Sigmoid colon (tissue), 7 donors: ENCODE measurements at regions of chr10 and their contacts with region 1.

Region 1: DNA sequence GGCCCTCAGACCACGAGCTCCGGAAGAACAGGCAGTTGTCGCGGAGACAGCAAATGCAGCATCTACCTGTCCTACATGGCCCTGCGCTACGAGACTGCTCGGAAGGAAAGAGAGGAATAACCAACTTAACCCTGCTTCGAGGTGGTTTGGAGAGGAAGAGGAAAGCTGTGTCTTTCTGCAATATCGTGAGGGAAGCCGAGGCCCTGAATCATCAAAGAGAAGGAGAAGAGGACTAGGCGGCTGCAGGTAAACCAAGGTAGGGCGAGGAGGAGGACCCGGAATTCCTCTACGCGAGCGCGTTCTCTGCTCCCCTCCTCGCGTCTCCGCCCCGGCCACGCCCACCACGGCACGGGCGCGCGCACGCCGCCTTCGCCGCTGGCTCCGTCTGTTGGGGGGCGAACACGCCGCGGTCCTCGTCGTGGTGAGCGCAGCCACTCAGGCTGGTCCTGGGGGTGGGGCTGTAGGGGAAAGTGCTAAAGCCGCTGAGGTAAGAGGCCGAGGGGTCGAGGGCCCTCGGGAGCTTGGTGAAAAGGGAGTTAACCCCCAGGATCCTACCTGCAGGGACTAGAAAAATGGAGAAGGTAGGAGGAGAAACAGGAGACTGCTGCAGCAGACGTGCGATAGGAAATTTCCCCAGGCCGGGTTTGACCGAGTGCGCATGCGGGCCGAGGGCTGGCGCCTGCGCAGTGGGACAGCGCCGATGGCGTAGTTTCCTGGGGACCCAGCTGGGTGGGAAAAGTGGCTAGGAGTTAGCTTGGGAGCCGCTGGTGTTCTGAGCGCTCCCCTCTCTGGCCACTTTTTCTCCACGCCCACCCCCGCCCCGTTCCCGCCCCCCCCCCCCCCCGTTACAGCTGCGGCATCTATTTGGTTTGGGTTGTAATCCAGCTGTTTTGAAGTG is at the starts of genes ANAPC16 and ASCC1:
- DNase-seq: peak; percentile 96
- H3K4me3 ChIP-seq: peak within 1 kb of the TSS; percentile 60 to 79 (median 70)
- H3K27ac ChIP-seq: peak within 1 kb of the TSS; percentile 86 to 99 (median 92)
- H3K4me1 ChIP-seq: peaks cover 0 to 51% (median 34%) of the 10 kb centered on the region in 4 donors
- H3K27me3 ChIP-seq: no peaks in the 10 kb centered on the region
- CTCF ChIP-seq: no peak
- EP300 ChIP-seq: peak in 1 of 4 donors; percentile 87
- POLR2A ChIP-seq: peak; percentile 88 to 95
- total RNA-seq, gene ANAPC16: 80.0 to 228 (median 157) TPM
- total RNA-seq, gene ASCC1: 21.0 to 53.7 (median 37.1) TPM

Region 2: GRCh38 chr10:71957546-71958275 is 258.2 kb before region 1 on chr10:
- intact Hi-C with region 1: loop called (anchors 10 kb)
- DNase-seq: no peak
- H3K4me3 ChIP-seq: no peak overlapping the region
- H3K27ac ChIP-seq: no peak overlapping the region
- H3K4me1 ChIP-seq: peaks cover 0 to 7% (median 4%) of the 10 kb centered on the region in 4 donors
- H3K27me3 ChIP-seq: no peaks in the 10 kb centered on the region
- CTCF ChIP-seq: no peak
- EP300 ChIP-seq: no peak
- POLR2A ChIP-seq: no peak

Region 3: DNA sequence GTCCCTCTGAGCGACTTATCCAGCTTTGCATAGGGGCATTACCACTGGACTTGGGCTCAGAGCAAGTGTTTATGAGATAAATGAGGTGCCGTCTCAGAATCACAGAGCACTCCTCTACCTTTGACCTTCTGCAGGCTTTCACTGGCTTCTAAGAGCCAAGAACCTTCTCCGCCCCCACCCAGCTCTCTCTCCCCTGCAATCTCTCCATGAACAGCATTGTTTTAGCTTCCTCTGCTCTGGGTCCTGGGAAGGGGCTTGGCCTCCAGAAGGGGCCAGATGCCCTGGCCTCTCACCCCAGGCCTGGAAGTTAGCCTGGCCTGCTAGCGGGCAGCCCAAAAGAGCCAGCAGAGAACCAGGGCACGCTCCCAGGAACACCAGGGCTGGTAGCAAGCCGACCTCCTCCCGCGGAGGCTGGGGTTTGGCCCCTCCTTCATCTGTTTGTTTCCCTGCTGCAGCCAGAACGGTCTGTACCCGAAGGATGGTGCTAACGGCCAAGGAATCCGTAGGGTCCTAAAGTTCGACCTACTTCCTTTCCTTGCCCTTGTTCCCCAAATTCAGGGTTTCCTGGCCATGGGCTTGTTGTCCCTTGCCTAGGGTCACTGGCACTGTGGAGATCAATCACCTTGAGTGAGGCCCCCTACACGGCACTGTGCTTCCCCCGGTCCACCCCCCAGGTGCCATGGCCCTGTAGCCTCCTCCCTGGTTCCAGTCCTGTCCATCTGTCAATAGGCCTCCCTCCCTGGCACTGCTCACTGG is 39.1 kb after region 1 on chr10:
- intact Hi-C with region 1: loop called (anchors 5 kb)
- DNase-seq: peak; percentile 98
- H3K4me3 ChIP-seq: no peak overlapping the region
- H3K27ac ChIP-seq: peak overlapping the region; percentile 89 to 95 (median 91)
- H3K4me1 ChIP-seq: peaks cover 0 to 91% (median 80%) of the 10 kb centered on the region in 4 donors
- H3K27me3 ChIP-seq: no peaks in the 10 kb centered on the region
- CTCF ChIP-seq: no peak
- EP300 ChIP-seq: peak; percentile 82 to 96 (median 88)
- POLR2A ChIP-seq: peak in 1 of 2 donors; percentile 60

Region 4: GRCh38 chr10:72319416-72320254 is 103.7 kb after region 1 on chr10:
- intact Hi-C with region 1: loop called (anchors 5 kb)
- DNase-seq: peak; percentile 97
- H3K4me3 ChIP-seq: peak overlapping the region; percentile 17 to 51 (median 44)
- H3K27ac ChIP-seq: peak overlapping the region; percentile 84 to 93 (median 86)
- H3K4me1 ChIP-seq: peaks cover 0 to 56% (median 56%) of the 10 kb centered on the region in 4 donors
- H3K27me3 ChIP-seq: no peaks in the 10 kb centered on the region
- CTCF ChIP-seq: peak in 1 of 4 experiments; percentile 16
- EP300 ChIP-seq: peak in 2 of 4 donors; percentile 27 to 69
- POLR2A ChIP-seq: no peak

Region 5: GRCh38 chr10:72331601-72332422 is 115.9 kb after region 1 on chr10:
- intact Hi-C with region 1: loop called (anchors 5 kb)
- DNase-seq: peak; percentile 91
- H3K4me3 ChIP-seq: peak overlapping the region in 1 of 4 donors; percentile 14
- H3K27ac ChIP-seq: peak overlapping the region; percentile 75 to 87 (median 80)
- H3K4me1 ChIP-seq: peaks cover 0 to 69% (median 60%) of the 10 kb centered on the region in 4 donors
- H3K27me3 ChIP-seq: no peaks in the 10 kb centered on the region
- CTCF ChIP-seq: peak; percentile 10 to 47 (median 34)
- EP300 ChIP-seq: no peak
- POLR2A ChIP-seq: no peak